Activated T-helper 1 cell treated with anti-CD3 and anti-CD28 coated beads, Interleukin-12 subunit alpha, Interleukin-12 subunit beta, Interleukin-2, Interleukin-4 antibody, amounts not matched to agents 30 ng/mL and 10 ng/mL and 1 ng/mL, durations not matched to agents 14 hours and 24 hours and 36 hours (primary cell): ENCODE measurements at regions of chr5 and their contacts with region 1.

Region 1: DNA sequence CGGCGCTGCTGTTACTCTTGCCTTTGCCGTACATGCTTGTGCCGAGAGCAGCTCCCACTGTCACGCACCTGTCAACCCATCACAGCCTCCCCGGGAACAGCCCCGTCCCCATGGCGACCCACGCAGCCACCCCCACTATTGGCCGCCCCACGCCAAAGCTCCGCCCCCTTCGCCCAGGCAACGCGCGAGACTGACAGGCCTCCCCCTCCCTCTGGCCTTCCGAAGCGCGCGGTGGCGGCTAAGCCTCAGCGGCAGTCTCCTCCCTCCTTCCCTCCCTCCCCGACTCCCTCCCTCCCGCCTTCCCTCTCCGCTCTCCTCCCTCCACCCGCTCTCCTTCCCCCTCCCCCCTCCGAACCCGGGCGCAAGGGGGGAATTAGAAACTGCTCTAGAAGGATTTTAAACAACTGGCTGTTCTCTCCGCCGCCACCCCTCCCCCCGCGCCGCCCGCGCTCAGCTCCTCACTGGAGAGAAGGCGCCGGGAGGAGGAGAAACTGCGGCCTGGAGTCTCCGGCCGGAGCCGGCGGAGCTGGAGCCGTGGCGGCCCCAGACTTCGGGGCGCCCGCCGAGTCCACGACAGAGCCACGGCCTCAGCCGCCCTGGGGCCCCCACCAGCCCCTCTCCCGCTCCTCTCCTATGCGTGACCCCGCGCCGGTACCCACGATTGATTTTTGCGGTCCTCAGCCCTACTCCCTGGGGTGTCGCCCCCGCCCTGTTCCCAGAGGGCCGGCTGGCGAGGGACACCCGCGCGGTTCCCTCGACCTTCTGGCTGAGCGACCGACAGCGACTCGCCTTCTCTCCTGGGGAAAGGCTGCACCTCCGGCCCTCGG is at the start of gene SSBP2:
- DNase-seq: peak; percentile 98
- H3K4me3 Mint-ChIP-seq: peak within 1 kb of the TSS; percentile 91
- H3K27ac Mint-ChIP-seq: peak within 1 kb of the TSS; percentile 92
- H3K4me1 Mint-ChIP-seq: peaks cover 27% of the 10 kb centered on the region
- H3K27me3 Mint-ChIP-seq: peaks cover 9% of the 10 kb centered on the region
- total RNA-seq, gene SSBP2: 8.4 and 12.7 TPM in 2 replicates

Region 2: GRCh38 chr5:81506900-81507588 is 244.2 kb before region 1 on chr5:
- intact Hi-C with region 1: loop called (anchors 1 kb)
- DNase-seq: peak; percentile 11
- H3K4me3 Mint-ChIP-seq: no peak overlapping the region
- H3K27ac Mint-ChIP-seq: no peak overlapping the region
- H3K4me1 Mint-ChIP-seq: no peaks in the 10 kb centered on the region
- H3K27me3 Mint-ChIP-seq: no peaks in the 10 kb centered on the region

Region 3: GRCh38 chr5:81768667-81769452 is 17.6 kb after region 1 on chr5:
- intact Hi-C with region 1: no loop called
- DNase-seq: no peak
- H3K4me3 Mint-ChIP-seq: no peak overlapping the region
- H3K27ac Mint-ChIP-seq: no peak overlapping the region
- H3K4me1 Mint-ChIP-seq: no peaks in the 10 kb centered on the region
- H3K27me3 Mint-ChIP-seq: peaks cover 4% of the 10 kb centered on the region

Region 4: GRCh38 chr5:81779125-81779915 is 28.1 kb after region 1 on chr5:
- intact Hi-C with region 1: loop called (anchors 1 kb)
- DNase-seq: peak; percentile 16
- H3K4me3 Mint-ChIP-seq: peak overlapping the region; percentile 78
- H3K27ac Mint-ChIP-seq: peak overlapping the region; percentile 63
- H3K4me1 Mint-ChIP-seq: peaks cover 27% of the 10 kb centered on the region
- H3K27me3 Mint-ChIP-seq: peaks cover 2% of the 10 kb centered on the region

Region 5: GRCh38 chr5:82074950-82075349 is 323.7 kb after region 1 on chr5:
- intact Hi-C with region 1: no loop called
- DNase-seq: no peak
- H3K4me3 Mint-ChIP-seq: no peak overlapping the region
- H3K27ac Mint-ChIP-seq: no peak overlapping the region
- H3K4me1 Mint-ChIP-seq: no peaks in the 10 kb centered on the region
- H3K27me3 Mint-ChIP-seq: peaks cover 3% of the 10 kb centered on the region

Region 6: DNA sequence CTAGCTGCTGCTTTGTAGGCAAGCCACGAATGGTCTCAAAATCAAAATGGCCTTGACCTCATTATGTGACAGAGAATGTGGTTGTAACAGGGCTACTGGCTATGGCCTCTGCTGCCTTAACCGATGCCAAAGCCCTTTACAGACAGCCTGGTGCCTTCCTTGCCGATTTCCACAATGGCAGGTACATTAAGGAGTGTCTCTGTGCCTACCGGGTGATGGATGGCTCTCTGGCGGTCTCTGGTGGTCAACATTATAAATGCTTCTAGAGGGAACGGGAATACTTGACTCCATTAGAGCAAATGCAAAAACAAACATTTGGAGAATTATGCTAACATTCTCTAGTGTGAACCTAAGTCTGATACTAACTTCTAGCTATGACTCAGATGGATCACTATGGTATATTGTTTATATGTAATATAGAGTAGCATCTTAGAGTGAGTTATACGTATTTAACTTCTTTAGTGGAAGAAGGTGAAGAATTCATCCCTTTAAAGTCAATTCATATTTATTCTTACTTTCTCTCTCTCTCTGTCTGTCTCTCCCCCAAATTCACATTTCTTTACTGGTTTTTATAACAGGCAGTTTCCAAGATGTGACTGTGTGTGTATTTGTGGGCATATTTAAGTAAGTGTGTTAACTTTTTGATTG is 474.4 kb after region 1 on chr5:
- intact Hi-C with region 1: loop called (anchors 5 kb)
- DNase-seq: peak; percentile 55
- H3K4me3 Mint-ChIP-seq: no peak overlapping the region
- H3K27ac Mint-ChIP-seq: no peak overlapping the region
- H3K4me1 Mint-ChIP-seq: no peaks in the 10 kb centered on the region
- H3K27me3 Mint-ChIP-seq: no peaks in the 10 kb centered on the region

Region 7: DNA sequence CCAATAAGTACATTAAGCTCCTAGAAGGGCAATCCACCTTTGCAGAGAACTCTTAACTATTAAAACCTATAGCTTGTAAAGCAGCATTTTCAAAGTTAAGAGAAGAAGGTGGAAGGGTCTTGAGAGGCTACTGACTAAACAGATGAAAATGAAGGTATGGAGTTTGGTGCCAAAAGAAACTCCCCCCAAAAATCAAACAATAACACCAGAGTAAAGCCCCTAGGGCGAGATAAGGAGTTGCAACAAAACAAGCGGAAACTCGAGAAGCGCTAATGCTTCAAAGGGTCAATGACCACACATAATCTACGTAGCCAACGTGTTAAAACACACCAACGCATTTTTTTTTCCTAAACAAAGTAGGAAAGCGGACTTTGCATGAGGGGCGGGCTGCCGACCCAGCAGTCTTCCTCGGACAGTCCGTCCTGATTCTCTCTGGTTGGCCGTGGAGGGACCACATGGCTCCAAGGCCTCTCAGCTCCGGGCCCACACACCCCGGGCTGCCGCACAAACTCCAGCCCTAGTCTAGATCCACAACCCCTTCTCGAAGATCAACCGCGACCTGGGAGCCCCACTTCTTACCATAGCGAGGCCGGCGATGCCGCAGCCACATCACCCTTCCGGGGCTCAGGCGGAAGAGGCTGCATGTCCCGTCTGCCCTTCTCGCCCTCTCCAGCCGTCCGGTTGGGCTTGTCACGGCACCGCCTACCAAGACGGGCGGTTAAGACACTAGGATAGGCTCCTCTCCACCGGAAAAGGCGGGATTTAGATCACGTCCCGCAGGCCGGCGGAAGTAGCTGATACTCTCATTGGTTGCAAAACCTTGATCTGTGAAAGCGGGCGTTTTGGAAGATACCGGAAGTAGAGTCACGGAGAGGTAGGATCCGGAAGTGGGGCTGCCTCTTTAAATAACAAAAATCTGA is 1325.8 kb after region 1 on chr5 and contains the starts of genes TMEM167A and XRCC4:
- intact Hi-C with region 1: loop called (anchors 2 kb)
- DNase-seq: peak; percentile 93
- H3K4me3 Mint-ChIP-seq: peak within 1 kb of the TSS; percentile 100
- H3K27ac Mint-ChIP-seq: peak within 1 kb of the TSS; percentile 99
- H3K4me1 Mint-ChIP-seq: peaks cover 43% of the 10 kb centered on the region
- H3K27me3 Mint-ChIP-seq: no peaks in the 10 kb centered on the region
- total RNA-seq, gene TMEM167A: 84.6 and 96.2 TPM in 2 replicates
- total RNA-seq, gene XRCC4: 10.2 and 11.2 TPM in 2 replicates